A549 (cell line): ENCODE measurements at regions of chr6 and their contacts with region 1.

Region 1: DNA sequence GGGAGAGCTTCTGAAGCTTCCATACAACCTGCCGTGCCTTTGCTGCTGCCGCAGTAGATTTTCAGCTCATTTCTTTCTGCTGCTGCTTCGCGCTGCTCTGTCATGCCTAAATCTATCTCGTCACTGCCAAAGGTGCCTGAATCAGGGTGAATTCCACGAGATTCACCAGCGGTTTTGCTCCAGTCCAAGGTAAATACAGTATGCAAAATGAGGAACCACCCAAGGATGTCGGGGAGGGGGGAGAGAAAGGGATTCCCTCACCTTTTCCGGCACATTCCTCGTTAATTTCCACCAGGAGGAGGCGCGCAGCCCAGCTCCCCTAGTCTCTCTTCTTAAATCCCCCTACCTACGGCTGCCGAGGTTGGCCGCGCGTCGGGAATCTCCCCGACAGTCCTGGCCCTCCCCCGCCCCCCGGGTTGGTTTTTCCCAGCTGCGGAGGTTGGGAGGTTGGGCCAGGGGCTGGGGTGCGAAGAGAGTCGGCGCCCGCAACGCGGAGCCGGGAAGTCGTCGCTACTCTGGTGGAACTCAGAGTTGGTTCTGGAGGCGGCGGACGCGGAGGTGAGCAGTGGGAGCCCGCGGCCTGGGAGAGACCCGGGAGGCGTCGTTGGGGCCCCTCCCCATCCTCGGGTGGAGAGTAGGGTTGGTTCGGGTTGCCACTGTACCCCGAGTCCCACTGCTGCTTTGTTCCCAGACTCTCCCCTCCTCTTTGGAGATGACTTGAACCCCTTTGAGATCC is at the start of gene TPBG:
- DNase-seq: peak; percentile 46 to 72
- ATAC-seq: peak; percentile 62 to 80
- H3K4me3 ChIP-seq: peak within 1 kb of the TSS; percentile 95
- H3K27ac ChIP-seq: peak within 1 kb of the TSS; percentile 96 to 98
- H3K4me1 ChIP-seq: peaks cover 27% of the 10 kb centered on the region; the same call in 2 of the 3 replicates
- CTCF ChIP-seq: peak; percentile 25; the same call in 1 of the 3 replicates
- EP300 ChIP-seq: no peak
- POLR2A ChIP-seq: peak; percentile 70
- RAD21 ChIP-seq: peak; percentile 22 to 41; a peak in 4 of 5 replicates
- polyA plus RNA-seq, gene TPBG: 47.1 and 54.4 TPM in 2 replicates

Region 2: GRCh38 chr6:82396964-82397751 is 33.6 kb after region 1 on chr6:
- CTCF ChIA-PET with region 1: interaction called, 4 read pairs
- POLR2A ChIA-PET with region 1: interaction called, 17 read pairs
- DNase-seq: peak; percentile 17 to 57
- ATAC-seq: peak; percentile 80 to 91
- H3K4me3 ChIP-seq: no peak overlapping the region
- H3K27ac ChIP-seq: peak overlapping the region; percentile 76 to 89
- H3K4me1 ChIP-seq: peaks cover 34% of the 10 kb centered on the region
- CTCF ChIP-seq: no peak
- EP300 ChIP-seq: peak; percentile 46 to 52; a peak in 2 of 5 replicates
- POLR2A ChIP-seq: no peak
- RAD21 ChIP-seq: no peak; a peak in 1 of 5 replicates